Transverse colon (tissue), 4 donors: ENCODE measurements at regions of chrX and their contacts with region 1.

Region 1: GRCh38 chrX:3940000-3940610 is 226.7 kb upstream of the PRKX start:
- DNase-seq: no peak
- H3K4me3 ChIP-seq: no peak overlapping the region
- H3K27ac ChIP-seq: no peak overlapping the region
- H3K4me1 ChIP-seq: no peaks in the 10 kb centered on the region
- H3K27me3 ChIP-seq: no peaks in the 10 kb centered on the region
- CTCF ChIP-seq: peak in 1 of 5 experiments; percentile 4
- EP300 ChIP-seq: no peak
- POLR2A ChIP-seq: no peak

Region 2: GRCh38 chrX:3788509-3789233 is 151.4 kb before region 1 on chrX:
- in situ Hi-C with region 1: loop called in 1 of 4 experiments (anchors 25 kb)
- intact Hi-C with region 1: no loop called
- DNase-seq: no peak
- H3K4me3 ChIP-seq: no peak overlapping the region
- H3K27ac ChIP-seq: no peak overlapping the region
- H3K4me1 ChIP-seq: no peaks in the 10 kb centered on the region
- H3K27me3 ChIP-seq: no peaks in the 10 kb centered on the region
- CTCF ChIP-seq: no peak
- EP300 ChIP-seq: no peak
- POLR2A ChIP-seq: no peak

Region 3: DNA sequence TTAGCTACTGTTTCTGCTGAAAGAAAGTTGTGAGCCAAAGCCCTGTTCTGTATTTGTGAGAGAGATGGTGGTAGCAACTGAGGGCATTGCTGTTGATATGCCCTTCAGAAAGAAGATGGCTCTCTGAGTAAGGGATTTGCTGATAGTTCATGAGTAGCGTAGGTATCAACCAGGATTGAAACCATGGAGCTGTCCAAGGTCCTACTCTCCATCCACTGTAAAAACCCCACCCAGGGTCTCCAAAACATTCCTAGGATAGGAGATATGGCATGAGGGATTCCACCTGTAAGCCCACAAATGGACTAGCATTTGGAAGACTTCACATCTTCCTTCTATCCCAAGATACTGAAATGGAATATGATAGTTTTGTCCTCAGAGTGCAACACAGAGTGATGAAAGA is 50.5 kb after region 1 on chrX:
- in situ Hi-C with region 1: no loop called
- intact Hi-C with region 1: no loop called
- DNase-seq: no peak
- H3K4me3 ChIP-seq: no peak overlapping the region
- H3K27ac ChIP-seq: no peak overlapping the region
- H3K4me1 ChIP-seq: no peaks in the 10 kb centered on the region
- H3K27me3 ChIP-seq: no peaks in the 10 kb centered on the region
- CTCF ChIP-seq: no peak
- EP300 ChIP-seq: no peak
- POLR2A ChIP-seq: no peak

Region 4: DNA sequence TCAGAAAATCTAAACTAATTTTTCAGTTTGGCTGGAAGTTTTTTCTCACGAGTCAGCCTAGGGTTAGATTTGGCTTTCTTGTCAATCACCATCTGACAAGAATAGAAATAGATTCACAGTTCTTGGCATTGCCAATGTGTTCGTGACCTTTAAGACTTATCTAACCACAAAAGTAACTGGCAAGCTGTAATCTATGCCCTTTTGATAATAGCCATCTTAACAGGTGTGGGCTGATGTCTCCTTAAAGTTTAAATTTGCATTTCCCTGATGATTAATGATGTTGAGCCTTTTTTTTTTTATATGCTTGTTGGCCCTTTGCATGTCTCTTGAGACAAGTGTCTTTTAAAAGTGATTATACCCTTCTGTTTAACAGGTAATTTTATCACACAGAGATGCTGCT is 233.6 kb after region 1 on chrX:
- in situ Hi-C with region 1: no loop called
- intact Hi-C with region 1: no loop called
- DNase-seq: no peak
- H3K4me3 ChIP-seq: no peak overlapping the region
- H3K27ac ChIP-seq: no peak overlapping the region
- H3K4me1 ChIP-seq: no peaks in the 10 kb centered on the region
- H3K27me3 ChIP-seq: no peaks in the 10 kb centered on the region
- CTCF ChIP-seq: no peak
- EP300 ChIP-seq: no peak
- POLR2A ChIP-seq: no peak